Ovary (tissue), 10 donors: ENCODE measurements at regions of chr17 and their contacts with region 1.

Region 1: DNA sequence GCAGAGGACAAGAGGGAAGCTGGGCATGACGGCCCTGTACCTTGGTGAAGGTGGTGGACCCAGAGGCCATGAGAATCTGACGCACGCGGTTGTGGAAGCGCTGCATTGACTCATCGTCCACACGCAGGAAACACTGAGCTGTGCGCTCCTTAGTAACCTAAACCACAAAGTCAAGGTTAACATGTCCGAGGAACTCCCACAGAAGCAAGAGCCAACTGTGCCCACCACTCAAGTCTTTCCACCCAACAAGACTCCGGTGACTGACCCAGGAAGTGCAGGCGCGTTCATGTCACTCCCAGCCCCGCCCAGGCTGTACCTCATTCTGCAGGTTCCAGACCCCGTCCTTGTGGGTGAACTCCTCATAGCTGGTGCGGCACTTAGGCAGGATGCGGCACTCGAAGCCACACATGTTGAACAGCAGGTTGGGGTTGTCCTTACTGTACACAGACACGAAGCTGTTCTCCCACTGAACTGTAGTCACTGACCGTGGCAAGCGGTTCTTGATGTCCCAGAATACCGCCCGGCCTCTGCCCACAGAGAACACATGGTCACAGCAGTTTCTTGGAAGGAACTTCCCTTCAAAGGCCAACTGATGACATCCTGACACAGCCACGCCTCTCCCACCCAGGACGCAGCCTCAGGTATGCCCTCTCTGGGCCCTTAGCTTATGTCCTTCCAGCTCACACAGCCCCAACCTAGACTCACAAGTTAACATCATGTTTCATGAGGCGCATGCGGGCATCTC is 11.5 kb downstream of the PRPF8 start:
- DNase-seq: no peak
- H3K4me3 ChIP-seq: no peak overlapping the region
- H3K27ac ChIP-seq: no peak overlapping the region
- H3K4me1 ChIP-seq: no peaks in the 10 kb centered on the region
- H3K27me3 ChIP-seq: no peaks in the 10 kb centered on the region
- CTCF ChIP-seq: no peak
- EP300 ChIP-seq: no peak
- POLR2A ChIP-seq: no peak

Region 2: GRCh38 chr17:1098387-1098786 is 574.8 kb before region 1 on chr17:
- intact Hi-C with region 1: no loop called
- DNase-seq: no peak
- H3K4me3 ChIP-seq: no peak overlapping the region
- H3K27ac ChIP-seq: no peak overlapping the region
- H3K4me1 ChIP-seq: no peaks in the 10 kb centered on the region
- H3K27me3 ChIP-seq: no peaks in the 10 kb centered on the region
- CTCF ChIP-seq: no peak
- EP300 ChIP-seq: no peak
- POLR2A ChIP-seq: no peak

Region 3: DNA sequence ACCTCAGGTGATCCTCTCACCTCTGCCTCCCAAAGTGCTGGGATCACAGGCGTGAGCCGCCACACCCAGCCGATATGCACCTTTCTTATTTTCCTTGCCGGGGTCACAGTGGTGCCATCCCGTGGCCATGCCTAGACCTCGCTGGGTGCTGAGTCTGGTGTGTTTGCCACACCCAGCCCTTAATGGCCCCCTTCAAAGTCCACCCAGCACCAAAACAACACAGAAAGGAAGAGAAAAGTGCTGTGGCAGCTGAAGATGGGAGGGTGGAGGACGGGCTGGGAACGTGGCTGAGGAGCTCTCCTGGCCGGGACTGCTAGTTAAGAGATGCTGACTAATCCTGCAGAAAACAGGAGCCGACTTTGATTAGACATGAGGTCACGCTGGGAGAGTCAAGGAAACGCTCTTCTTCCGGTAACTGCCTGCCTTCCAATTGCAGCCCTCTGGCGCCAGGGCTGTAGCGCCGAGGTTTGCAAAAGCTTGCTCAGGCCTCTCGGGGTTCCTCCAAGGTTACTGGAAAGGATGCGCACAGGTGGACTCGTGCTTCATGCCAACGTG is 55.5 kb before region 1 on chr17:
- intact Hi-C with region 1: no loop called
- DNase-seq: peak; percentile 50 to 64 (median 57)
- H3K4me3 ChIP-seq: no peak overlapping the region
- H3K27ac ChIP-seq: peak overlapping the region in 1 of 2 donors; percentile 59
- H3K4me1 ChIP-seq: peaks cover 1% of the 10 kb centered on the region
- H3K27me3 ChIP-seq: no peaks in the 10 kb centered on the region
- CTCF ChIP-seq: no peak
- EP300 ChIP-seq: no peak
- POLR2A ChIP-seq: no peak

Region 4: DNA sequence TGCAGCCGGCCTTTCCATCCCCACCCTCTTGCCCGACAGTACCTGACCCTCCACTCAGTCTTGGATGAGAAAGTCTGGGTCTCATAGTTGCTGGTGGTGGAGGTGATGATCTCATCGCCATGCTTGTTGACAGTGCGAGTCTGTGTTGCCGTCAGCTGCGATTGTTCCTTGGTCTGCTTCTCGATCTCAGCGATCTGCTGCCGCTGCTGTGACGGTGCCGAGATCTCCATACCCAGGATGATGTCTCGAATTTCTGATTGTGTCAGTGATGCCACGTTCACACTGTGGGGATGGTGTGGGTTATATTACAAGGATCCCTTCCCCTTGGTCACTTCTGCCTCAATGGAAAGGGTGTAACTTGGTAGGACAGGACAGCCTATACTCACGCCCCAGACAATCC is 19.5 kb before region 1 on chr17:
- intact Hi-C with region 1: no loop called
- DNase-seq: no peak
- H3K4me3 ChIP-seq: no peak overlapping the region
- H3K27ac ChIP-seq: no peak overlapping the region
- H3K4me1 ChIP-seq: peaks cover 6% of the 10 kb centered on the region
- H3K27me3 ChIP-seq: no peaks in the 10 kb centered on the region
- CTCF ChIP-seq: no peak
- EP300 ChIP-seq: no peak
- POLR2A ChIP-seq: no peak

Region 5: DNA sequence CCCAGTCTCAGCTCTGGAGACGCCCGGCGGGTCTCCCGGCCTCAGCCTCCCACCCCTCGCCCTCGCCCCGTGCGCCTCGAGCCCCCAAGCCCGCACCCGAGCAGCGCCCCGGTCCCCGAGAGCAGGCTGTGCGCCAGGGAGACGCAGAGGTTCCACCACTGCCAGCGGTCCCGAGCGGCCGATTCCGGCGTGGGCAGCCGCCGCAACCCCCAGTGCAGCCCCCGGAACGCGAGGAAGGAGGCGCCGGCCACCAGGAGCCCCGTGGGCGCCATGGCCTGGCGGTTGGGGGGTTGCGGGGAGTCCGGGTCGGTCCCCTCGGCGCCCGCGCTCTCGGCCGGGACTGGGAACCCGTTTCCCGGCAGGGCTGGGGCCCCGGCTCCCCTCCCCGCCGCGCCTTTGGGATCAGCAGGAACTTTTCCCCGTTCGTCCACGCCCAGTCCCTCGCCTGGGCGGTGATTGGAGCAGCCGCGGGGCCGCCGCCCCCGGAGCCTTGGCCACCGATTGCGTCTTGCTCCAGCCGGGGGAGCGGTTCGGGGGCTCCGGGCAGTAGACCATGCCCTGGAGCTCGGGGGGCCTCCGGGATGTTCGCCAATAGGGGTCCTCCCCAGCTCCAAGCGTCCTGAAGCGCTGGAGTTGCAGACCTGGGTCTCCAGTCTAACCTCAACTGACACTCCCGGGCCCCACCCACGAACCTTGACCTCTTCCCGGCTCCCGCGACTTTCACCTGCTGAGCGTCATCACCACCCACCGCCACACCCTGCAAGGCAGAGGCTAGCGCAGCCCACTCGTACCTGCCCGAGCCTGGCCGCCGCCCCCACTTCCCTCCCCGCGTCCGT is 37.0 kb after region 1 on chr17 and contains the start of gene TLCD2:
- intact Hi-C with region 1: loop called in 3 of 4 experiments (anchors 5 kb)
- DNase-seq: peak; percentile 76 to 85 (median 82)
- H3K4me3 ChIP-seq: peak within 1 kb of the TSS; percentile 83
- H3K27ac ChIP-seq: peak within 1 kb of the TSS; percentile 53 to 77
- H3K4me1 ChIP-seq: peaks cover 15% of the 10 kb centered on the region
- H3K27me3 ChIP-seq: no peaks in the 10 kb centered on the region
- CTCF ChIP-seq: peak in 1 of 3 donors; percentile 9
- EP300 ChIP-seq: no peak
- POLR2A ChIP-seq: peak; percentile 69
- total RNA-seq, gene TLCD2: 1.5 to 9.1 (median 5.6) TPM

Region 6: GRCh38 chr17:1783834-1784611 is 110.8 kb after region 1 on chr17:
- intact Hi-C with region 1: loop called in 1 of 4 experiments (anchors 5 kb)
- DNase-seq: peak; percentile 81 to 94 (median 84)
- H3K4me3 ChIP-seq: peak overlapping the region; percentile 14
- H3K27ac ChIP-seq: peak overlapping the region; percentile 92 to 94
- H3K4me1 ChIP-seq: peaks cover 29% of the 10 kb centered on the region
- H3K27me3 ChIP-seq: no peaks in the 10 kb centered on the region
- CTCF ChIP-seq: peak; percentile 81 to 97 (median 97)
- EP300 ChIP-seq: peak; percentile 93
- POLR2A ChIP-seq: peak; percentile 68

Region 7: GRCh38 chr17:2029911-2030778 is 356.9 kb after region 1 on chr17 and contains the start of gene DPH1:
- intact Hi-C with region 1: loop called in 1 of 4 experiments (anchors 10 kb)
- DNase-seq: peak; percentile 85 to 92 (median 90)
- H3K4me3 ChIP-seq: peak within 1 kb of the TSS; percentile 97
- H3K27ac ChIP-seq: peak within 1 kb of the TSS in 1 of 2 donors; percentile 6
- H3K4me1 ChIP-seq: peaks cover 5% of the 10 kb centered on the region
- H3K27me3 ChIP-seq: no peaks in the 10 kb centered on the region
- CTCF ChIP-seq: peak in 2 of 3 donors; percentile 19 to 24
- EP300 ChIP-seq: no peak
- POLR2A ChIP-seq: peak; percentile 45
- total RNA-seq, gene DPH1: 42.4 to 77.7 (median 46.0) TPM